ENCODE measurements at regions of chr19 and their contacts with region 1.

Region 1: DNA sequence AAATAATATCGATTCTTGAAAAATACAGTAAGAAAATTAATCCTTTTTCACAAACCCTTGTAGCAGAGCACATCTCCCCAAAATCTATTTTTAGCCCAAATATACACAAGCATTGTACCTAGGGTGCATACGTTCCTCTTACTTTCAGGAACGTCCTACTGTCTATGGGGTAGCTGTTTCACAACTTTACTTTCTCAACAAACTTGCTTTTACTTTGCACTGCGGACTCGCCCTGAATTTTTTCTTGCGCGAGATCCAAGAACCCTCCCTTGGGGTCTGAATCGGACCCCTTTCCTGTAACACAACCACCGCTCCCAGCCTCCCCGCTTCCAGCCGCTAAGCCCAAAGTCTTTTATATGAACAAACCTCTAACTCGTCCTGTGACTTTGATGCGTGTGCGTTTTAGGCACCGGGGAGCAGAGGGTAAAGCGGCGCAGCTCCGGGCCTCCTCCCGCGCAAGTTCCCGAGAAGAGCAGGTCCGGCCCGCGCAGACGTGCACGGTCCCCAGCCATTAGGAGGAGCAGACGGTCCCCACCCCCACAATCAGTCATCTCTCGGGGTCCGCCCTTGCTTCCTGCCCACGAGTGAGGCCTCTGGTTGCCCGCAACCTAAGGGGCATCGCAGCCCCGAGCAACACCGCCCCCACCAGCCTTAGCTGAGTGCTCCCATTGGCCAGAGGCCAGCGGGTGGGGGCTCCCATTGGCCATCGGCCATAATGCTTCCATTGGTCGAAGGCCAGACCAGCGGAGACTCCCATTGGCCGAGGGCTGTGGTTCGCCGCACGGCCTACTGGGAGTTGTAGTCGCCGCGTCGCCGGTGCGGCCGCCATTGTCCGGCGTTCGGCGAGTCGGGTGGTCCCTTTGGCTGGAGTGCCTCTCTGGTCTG is at the start of gene ZNF8:
- DNase-seq: peak; percentile 91 to 98
- H3K4me3 ChIP-seq: peak within 1 kb of the TSS; percentile 67 to 96
- H3K27ac ChIP-seq: peak within 1 kb of the TSS; percentile 77 to 92
- H3K4me1 ChIP-seq: no peaks in the 10 kb centered on the region
- H3K27me3 ChIP-seq: no peaks in the 10 kb centered on the region
- CTCF ChIP-seq: peak in 1 of 3 experiments; percentile 14
- total RNA-seq, gene ZNF8: 6.0 TPM

Region 2: DNA sequence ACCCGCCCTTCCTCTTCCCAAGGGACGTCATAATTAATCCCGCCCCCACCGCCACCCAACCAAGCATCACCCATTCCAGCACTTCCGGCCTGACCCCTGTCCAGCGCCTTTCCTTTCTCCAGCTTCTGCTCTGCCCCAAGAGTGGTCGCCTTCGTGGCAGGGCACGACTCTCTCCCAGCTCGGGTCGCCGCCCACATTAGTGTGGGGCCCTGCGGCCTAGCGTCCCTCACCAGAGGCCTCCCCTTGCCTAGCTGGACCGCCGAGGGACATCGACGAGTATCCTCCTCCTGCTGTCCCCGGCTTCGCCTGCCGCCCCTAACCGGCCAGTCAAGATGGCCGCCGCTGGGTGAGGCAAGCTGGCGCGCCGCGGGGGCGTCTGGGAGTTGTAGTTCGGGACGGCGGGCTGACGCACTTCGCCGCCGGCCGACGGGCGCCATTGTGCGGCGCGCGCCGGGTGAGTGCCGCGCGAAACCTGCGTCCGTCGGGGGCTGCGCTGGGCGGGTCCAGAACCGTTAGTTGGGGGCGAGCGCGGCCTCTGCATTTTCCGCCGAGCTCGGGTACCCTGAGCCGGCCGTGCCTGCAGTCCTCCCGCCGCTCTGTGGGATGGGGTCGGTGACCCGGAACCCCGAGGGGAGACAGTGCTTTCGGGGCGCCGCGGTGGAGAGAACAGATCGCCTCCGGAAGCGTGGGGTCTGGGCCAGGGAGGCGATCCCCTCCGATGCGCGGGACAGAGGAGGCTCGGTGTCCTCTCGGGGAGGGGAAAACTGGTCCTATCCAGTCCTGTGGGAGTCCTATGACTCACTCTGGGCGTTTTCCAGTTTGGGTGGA is 95.2 kb before region 1 on chr19 and contains the start of gene ZNF274:
- intact Hi-C with region 1: loop called (anchors 1 kb)
- DNase-seq: peak; percentile 71 to 94
- H3K4me3 ChIP-seq: peak within 1 kb of the TSS; percentile 84 to 93
- H3K27ac ChIP-seq: peak within 1 kb of the TSS; percentile 99
- H3K4me1 ChIP-seq: no peaks in the 10 kb centered on the region
- H3K27me3 ChIP-seq: no peaks in the 10 kb centered on the region
- CTCF ChIP-seq: no peak
- total RNA-seq, gene ZNF274: 14.7 TPM

Region 3: GRCh38 chr19:58296104-58296503 is 17.7 kb after region 1 on chr19:
- intact Hi-C with region 1: no loop called
- DNase-seq: no peak
- H3K4me3 ChIP-seq: no peak overlapping the region
- H3K27ac ChIP-seq: no peak overlapping the region
- H3K4me1 ChIP-seq: no peaks in the 10 kb centered on the region
- H3K27me3 ChIP-seq: no peaks in the 10 kb centered on the region
- CTCF ChIP-seq: no peak

Region 4: DNA sequence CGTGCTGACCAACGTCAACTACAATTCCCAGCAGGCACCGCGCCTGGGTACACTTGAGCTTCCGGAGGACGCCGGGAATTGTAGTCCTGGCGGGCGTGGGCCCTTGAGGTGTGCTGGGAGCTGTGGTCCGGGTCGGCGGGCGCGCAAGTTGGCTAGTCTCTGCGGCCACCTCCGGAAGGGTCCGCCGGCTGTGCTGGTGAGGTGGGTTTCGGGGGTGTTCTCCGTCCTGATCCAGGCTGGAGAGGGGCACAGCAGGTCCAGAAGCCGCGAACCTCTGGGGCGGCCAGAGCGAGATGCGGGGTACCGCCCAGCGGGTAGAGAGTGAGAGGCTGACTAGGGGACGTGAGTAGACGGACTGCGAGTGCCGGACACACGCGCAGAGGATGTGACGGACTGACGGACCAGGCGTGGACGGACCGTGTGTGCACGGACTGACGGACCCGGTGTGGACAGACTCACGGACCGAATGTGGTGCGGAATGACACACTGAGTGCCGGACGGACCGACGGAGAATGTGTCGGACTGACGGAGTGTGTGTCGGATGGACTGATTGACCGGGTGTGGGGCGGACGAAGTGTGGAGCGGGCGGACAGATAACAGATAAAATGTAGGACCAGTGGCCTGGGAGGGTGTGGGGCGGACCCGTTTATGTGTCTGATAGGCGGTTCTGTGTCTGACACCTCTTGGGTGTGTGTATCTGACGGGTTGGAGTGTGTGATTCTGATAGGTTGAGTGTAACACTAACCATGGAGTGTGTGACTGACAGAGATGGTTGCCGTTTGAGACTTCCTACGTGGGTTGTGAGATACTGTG is 48.7 kb after region 1 on chr19 and contains the start of gene ZSCAN22:
- intact Hi-C with region 1: loop called (anchors 1 kb)
- DNase-seq: peak; percentile 78 to 98
- H3K4me3 ChIP-seq: peak within 1 kb of the TSS; percentile 91 to 92
- H3K27ac ChIP-seq: peak within 1 kb of the TSS; percentile 91 to 96
- H3K4me1 ChIP-seq: peaks cover 4 to 13% of the 10 kb centered on the region in 2 donors
- H3K27me3 ChIP-seq: no peaks in the 10 kb centered on the region
- CTCF ChIP-seq: no peak
- total RNA-seq, gene ZSCAN22: 1.9 TPM